ENCODE measurements at regions of chr1 and their contacts with region 1.

Region 1: DNA sequence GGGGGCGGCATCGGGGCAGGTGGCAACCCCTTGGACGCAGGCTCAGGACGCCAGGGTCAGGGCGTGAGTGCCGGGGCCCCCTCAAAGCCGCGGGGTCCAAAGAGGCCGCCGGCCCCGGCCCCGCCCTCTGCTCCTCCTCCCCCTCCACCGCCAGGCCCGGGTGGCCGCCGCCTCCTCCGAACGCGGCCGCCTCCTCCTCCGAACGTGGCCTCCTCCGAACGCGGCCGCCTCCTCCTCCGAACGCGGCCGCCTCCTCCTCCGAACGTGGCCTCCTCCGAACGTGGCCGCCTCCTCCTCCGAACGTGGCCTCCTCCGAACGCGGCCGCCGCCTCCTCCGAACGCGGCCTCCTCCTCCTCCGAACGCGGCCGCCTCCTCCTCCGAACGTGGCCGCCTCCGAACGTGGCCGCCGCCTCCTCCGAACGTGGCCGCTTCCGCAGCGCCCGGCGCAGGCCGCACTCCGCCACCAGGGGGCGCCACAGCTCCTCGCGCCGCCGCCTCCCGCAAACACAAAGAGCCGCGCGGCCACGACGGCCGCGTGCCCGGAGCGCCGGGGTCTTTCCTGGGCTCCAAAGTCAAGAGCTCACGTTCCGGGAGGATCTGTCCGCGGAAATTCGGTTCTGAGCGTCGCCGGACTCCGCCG is 19.3 kb upstream of the SAMD11 start:
- DNase-seq: peak; percentile 91
- ATAC-seq: peak; percentile 86

Region 2: GRCh38 chr1:938711-939489 is 34.5 kb after region 1 on chr1:
- intact Hi-C with region 1: loop called (anchors 1 kb)
- DNase-seq: no peak
- ATAC-seq: no peak

Region 3: GRCh38 chr1:958823-959729 is 54.6 kb after region 1 on chr1 and contains the start of gene NOC2L:
- intact Hi-C with region 1: loop called (anchors 5 kb)
- DNase-seq: peak; percentile 97
- ATAC-seq: peak; percentile 95
- total RNA-seq, gene NOC2L: 41.7 TPM

Measured in Right ventricle myocardium inferior (tissue), 1 donor.